ENCODE measurements at regions of chr6 and their contacts with region 1.

Region 1: GRCh38 chr6:71489747-71490315 is 201.2 kb downstream of the OGFRL1 start:
- DNase-seq: no peak
- H3K4me3 Mint-ChIP-seq: no peak overlapping the region
- H3K27ac Mint-ChIP-seq: no peak overlapping the region
- H3K4me1 Mint-ChIP-seq: no peaks in the 10 kb centered on the region
- H3K27me3 Mint-ChIP-seq: peaks cover 5% of the 10 kb centered on the region

Region 2: GRCh38 chr6:71383901-71384489 is 105.8 kb before region 1 on chr6:
- intact Hi-C with region 1: loop called (anchors 10 kb)
- DNase-seq: peak; percentile 57
- H3K4me3 Mint-ChIP-seq: no peak overlapping the region
- H3K27ac Mint-ChIP-seq: no peak overlapping the region
- H3K4me1 Mint-ChIP-seq: no peaks in the 10 kb centered on the region
- H3K27me3 Mint-ChIP-seq: peaks cover 5% of the 10 kb centered on the region

Region 3: DNA sequence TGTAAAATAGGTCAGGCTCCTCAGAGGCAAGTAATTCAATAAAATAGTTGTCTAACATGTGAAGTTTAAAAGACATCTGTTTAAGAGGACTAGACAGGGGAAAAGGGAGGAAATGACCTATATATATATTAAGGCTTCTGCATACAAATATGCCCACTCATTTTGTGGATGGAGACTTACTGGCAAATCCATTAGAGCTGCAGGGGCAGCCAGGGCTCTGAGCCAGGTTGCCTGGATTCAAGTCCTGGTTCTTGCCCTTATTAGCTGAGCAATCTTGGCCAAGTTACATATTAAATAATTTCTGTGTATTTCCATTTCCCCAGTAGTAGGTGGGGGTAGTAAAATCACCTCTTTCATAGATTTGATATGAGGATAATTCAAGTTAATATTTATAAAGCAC is 109.5 kb after region 1 on chr6:
- intact Hi-C with region 1: no loop called
- DNase-seq: no peak
- H3K4me3 Mint-ChIP-seq: no peak overlapping the region
- H3K27ac Mint-ChIP-seq: no peak overlapping the region
- H3K4me1 Mint-ChIP-seq: no peaks in the 10 kb centered on the region
- H3K27me3 Mint-ChIP-seq: no peaks in the 10 kb centered on the region